PC-9 (cell line): ENCODE measurements at regions of chr16 and their contacts with region 1.

Region 1: DNA sequence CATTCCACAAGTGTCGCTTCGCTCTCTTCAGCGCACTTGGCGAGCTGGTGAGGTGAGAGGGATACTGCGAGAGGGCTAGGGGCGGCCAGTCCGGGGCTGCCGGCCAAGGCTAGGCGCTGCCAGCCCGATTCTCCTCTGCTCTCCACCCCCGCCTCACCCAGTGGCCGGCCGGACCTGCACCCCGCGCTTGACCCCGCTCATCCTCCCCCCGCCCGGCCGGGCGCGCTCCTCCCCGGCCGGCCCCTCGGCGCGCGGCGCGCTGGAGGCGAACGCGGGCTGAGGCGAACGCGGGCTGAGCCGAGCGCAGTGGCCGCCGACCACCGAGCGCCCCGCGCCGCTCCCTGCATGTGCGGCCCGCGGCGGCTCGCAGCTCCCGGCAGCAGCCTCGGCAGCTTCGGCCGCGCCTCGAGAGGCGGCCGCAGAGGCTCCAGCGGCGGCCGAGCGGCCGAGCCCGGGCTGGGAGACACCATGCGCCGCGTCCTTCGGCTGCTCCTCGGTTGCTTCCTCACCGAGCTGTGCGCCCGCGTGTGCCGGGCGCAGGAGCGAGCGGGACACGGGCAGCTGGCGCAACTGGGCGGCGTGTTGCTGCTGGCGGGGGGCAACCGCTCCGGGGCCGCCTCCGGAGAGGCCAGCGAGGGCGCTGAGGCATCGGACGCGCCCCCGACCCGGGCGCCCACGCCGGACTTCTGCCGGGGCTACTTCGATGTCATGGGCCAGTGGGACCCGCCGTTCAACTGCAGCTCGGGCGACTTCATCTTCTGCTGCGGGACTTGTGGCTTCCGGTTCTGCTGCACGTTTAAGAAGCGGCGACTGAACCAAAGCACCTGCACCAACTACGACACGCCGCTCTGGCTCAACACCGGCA is at the start of gene SHISA9:
- DNase-seq: no peak
- H3K4me3 ChIP-seq: peak within 1 kb of the TSS; percentile 94
- H3K27ac ChIP-seq: peak within 1 kb of the TSS; percentile 99
- H3K4me1 ChIP-seq: peaks cover 50% of the 10 kb centered on the region
- H3K27me3 ChIP-seq: no peaks in the 10 kb centered on the region
- CTCF ChIP-seq: no peak
- total RNA-seq, gene SHISA9: 64.5 and 80.5 TPM in 2 replicates

Region 2: GRCh38 chr16:12455287-12455798 is 446.5 kb before region 1 on chr16:
- CTCF ChIA-PET with region 1: interaction called, 3 read pairs
- POLR2A ChIA-PET with region 1: no interaction called
- intact Hi-C with region 1: loop called (anchors 1 kb)
- DNase-seq: peak; percentile 38 to 80
- H3K4me3 ChIP-seq: no peak overlapping the region
- H3K27ac ChIP-seq: no peak overlapping the region
- H3K4me1 ChIP-seq: no peaks in the 10 kb centered on the region
- H3K27me3 ChIP-seq: no peaks in the 10 kb centered on the region
- CTCF ChIP-seq: peak; percentile 95

Region 3: DNA sequence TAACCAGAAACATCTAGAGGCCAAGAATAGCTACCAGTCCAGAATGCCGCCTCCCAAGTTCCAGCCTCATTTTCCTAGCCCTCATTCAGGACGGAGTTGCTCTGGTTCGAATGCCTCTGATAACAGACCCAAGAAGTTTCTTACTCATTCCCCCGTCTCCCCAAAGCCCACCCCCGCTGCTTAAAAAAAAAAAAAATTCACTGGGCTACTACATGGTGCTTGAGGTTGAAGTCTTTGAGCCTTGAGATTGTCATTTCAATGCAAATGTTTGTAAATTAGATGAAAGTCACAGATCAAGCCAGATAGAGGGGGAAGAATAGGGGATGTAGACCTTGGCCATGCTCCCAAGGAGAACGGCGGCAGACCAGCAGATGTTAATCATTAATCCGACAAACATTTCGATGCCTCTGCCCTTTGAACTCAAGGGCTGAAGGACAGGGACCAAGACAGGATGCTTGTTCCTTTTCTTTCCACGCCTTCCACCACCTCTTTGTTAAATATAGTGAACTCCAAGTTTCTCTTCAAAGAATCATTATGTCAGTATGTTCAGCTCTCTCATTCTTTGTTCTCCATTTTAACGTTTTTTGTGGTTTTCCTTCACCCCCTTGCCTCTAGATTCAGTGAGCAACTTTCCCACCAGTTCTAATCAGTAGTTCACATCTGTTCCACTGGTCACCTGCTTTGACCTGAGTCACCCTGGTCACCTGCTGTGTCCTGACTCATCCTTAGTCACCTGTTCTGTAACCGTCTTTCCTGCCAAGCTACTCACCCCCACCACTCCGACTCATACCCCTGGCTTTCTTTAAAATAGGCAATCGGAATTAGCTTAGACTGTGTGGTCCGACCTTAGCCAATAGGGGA is 288.5 kb before region 1 on chr16:
- CTCF ChIA-PET with region 1: no interaction called
- POLR2A ChIA-PET with region 1: interaction called, 8 read pairs
- intact Hi-C with region 1: loop called (anchors 1 kb)
- DNase-seq: peak; percentile 89 to 97
- H3K4me3 ChIP-seq: peak overlapping the region; percentile 46; the same call in 1 of the 2 replicates
- H3K27ac ChIP-seq: peak overlapping the region; percentile 100
- H3K4me1 ChIP-seq: peaks cover 55% of the 10 kb centered on the region
- H3K27me3 ChIP-seq: no peaks in the 10 kb centered on the region
- CTCF ChIP-seq: no peak

Region 4: DNA sequence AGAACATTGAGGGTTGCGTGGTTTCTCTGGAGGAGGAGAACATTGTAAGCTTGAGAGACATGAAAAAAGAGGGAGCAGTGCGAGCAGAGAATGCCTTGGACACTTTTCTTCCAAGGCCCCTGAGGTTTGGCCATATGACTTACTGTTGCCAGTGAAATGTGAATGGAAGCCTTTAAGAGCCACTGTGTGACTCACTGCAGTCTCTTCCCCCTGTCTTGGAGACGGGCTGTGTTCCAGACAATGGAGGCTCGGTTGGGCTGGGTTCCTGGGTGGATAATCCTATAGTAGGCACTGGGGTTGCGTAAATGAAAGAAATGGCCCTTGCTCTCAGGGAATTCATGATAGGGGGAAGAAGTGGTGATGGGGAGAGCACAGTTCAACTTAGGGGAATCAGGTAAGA is 75.1 kb after region 1 on chr16:
- CTCF ChIA-PET with region 1: no interaction called
- POLR2A ChIA-PET with region 1: interaction called, 11 read pairs
- intact Hi-C with region 1: loop called (anchors 5 kb)
- DNase-seq: peak in 1 of 2 experiments; percentile 63
- H3K4me3 ChIP-seq: no peak overlapping the region
- H3K27ac ChIP-seq: peak overlapping the region; percentile 49
- H3K4me1 ChIP-seq: peaks cover 24% of the 10 kb centered on the region
- H3K27me3 ChIP-seq: no peaks in the 10 kb centered on the region
- CTCF ChIP-seq: no peak

Region 5: DNA sequence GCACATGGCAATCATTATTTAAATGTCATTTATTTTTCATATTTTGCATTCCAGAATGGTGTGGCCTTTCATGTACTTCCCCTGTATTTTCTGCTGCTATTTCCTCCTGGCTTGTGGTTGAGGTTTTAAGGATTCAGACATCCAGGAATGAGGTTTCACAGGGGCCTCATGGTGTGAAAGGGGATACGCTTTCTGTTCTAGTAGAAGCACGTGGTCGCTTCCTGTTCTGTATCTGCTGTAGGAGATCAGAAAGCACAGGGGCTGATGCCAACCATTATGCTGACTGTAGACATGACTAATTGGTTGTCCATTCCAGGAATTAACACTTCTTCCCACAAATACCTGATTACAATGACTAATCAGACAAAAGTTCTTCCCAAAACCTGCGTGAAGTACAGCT is 405.4 kb after region 1 on chr16:
- CTCF ChIA-PET with region 1: no interaction called
- POLR2A ChIA-PET with region 1: interaction called, 4 read pairs
- intact Hi-C with region 1: loop called (anchors 1 kb)
- DNase-seq: peak; percentile 86 to 99
- H3K4me3 ChIP-seq: no peak overlapping the region
- H3K27ac ChIP-seq: peak overlapping the region; percentile 88
- H3K4me1 ChIP-seq: peaks cover 44% of the 10 kb centered on the region
- H3K27me3 ChIP-seq: no peaks in the 10 kb centered on the region
- CTCF ChIP-seq: no peak

Region 6: DNA sequence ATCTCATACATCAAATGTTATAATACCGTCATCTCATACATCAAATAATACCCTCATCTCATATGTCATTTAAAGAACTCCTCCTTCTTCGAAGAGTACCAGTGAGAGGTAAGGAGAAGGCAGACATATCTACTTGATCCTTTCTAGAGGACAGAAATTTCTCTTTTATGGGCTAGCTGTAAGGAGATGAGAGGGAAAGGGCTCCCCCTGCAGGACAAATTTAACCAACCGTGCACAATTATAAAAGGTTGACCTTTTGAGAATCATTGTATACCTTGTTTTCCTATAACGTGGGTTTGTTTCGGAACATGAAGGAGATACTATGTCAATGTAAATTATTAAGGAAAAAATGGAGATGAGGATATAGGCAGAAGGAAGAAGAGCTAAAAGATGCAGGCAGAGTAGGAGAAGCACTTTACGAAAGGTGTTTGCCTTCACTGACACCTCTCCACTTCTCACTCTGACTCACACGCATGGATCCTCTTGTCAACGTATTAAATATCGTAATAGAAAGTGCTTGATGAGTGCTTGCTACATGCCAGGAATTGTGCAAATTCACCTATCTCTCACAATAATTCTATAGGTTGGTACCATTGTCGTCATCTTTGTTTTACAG is 552.2 kb after region 1 on chr16:
- CTCF ChIA-PET with region 1: no interaction called
- POLR2A ChIA-PET with region 1: no interaction called
- intact Hi-C with region 1: loop called (anchors 1 kb)
- DNase-seq: peak in 1 of 2 experiments; percentile 56
- H3K4me3 ChIP-seq: no peak overlapping the region
- H3K27ac ChIP-seq: no peak overlapping the region
- H3K4me1 ChIP-seq: no peaks in the 10 kb centered on the region
- H3K27me3 ChIP-seq: no peaks in the 10 kb centered on the region
- CTCF ChIP-seq: peak; percentile 90